ENCODE measurements at regions of chr4 and their contacts with region 1.

Region 1: DNA sequence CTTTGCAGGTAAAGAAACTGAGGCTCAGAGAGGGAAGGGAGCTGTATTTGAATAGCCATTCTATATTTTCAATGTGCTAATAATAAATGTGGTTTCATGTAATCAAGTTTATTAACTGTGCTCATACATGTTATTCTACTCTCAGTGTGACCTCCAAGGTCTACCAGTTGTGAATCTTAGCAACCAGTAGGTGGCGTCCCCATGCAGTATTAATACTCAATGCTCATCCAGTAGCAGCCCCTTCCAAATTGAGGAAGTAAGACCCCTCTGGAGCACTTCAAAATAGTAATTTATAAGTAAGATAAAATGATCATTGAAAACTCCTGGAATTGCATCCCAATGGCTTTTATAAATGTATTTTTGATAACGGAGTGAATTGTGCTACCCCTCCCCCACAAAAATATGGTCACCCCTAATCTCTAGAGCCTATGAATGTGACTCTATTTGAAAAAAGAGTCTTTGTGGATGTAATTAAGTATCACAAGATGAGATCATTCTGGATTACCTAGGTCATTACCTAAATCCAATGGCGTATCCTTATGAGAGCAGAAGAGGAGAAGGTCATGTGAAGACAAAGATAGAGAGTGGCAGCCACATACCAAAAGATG is 20.4 kb upstream of the SEPSECS start:
- DNase-seq: peak in 18 of 42 donors; percentile 15 to 58 (median 30)

Region 2: GRCh38 chr4:25367004-25367621 is 186.5 kb after region 1 on chr4:
- intact Hi-C with region 1: loop called (anchors 10 kb)
- DNase-seq: peak in 1 of 42 donors; percentile 14

Measured in head of caudate nucleus (tissue), 42 donors.